ENCODE measurements at regions of chr1 and their contacts with region 1.

Region 1: GRCh38 chr1:190881064-190881463 is 403.4 kb upstream of the BRINP3 start:
- DNase-seq: no peak
- H3K4me3 ChIP-seq: no peak overlapping the region
- H3K27ac ChIP-seq: no peak overlapping the region
- H3K4me1 ChIP-seq: no peaks in the 10 kb centered on the region
- H3K27me3 ChIP-seq: no peaks in the 10 kb centered on the region
- CTCF ChIP-seq: no peak
- POLR2A ChIP-seq: no peak

Region 2: GRCh38 chr1:190518495-190518894 is 362.6 kb before region 1 on chr1:
- CTCF ChIA-PET with region 1: no interaction called
- POLR2A ChIA-PET with region 1: no interaction called
- dilution Hi-C with region 1: no loop called
- intact Hi-C with region 1: loop called (anchors 5 kb)
- DNase-seq: no peak
- H3K4me3 ChIP-seq: no peak overlapping the region
- H3K27ac ChIP-seq: no peak overlapping the region
- H3K4me1 ChIP-seq: no peaks in the 10 kb centered on the region
- H3K27me3 ChIP-seq: no peaks in the 10 kb centered on the region
- CTCF ChIP-seq: no peak
- POLR2A ChIP-seq: no peak

Region 3: GRCh38 chr1:190858140-190858539 is 22.9 kb before region 1 on chr1:
- CTCF ChIA-PET with region 1: no interaction called
- POLR2A ChIA-PET with region 1: no interaction called
- dilution Hi-C with region 1: no loop called
- intact Hi-C with region 1: no loop called
- DNase-seq: no peak
- H3K4me3 ChIP-seq: no peak overlapping the region
- H3K27ac ChIP-seq: no peak overlapping the region
- H3K4me1 ChIP-seq: no peaks in the 10 kb centered on the region
- H3K27me3 ChIP-seq: no peaks in the 10 kb centered on the region
- CTCF ChIP-seq: no peak
- POLR2A ChIP-seq: no peak

Region 4: GRCh38 chr1:190949939-190950338 is 68.9 kb after region 1 on chr1:
- CTCF ChIA-PET with region 1: no interaction called
- POLR2A ChIA-PET with region 1: no interaction called
- dilution Hi-C with region 1: no loop called
- intact Hi-C with region 1: no loop called
- DNase-seq: no peak
- H3K4me3 ChIP-seq: no peak overlapping the region
- H3K27ac ChIP-seq: no peak overlapping the region
- H3K4me1 ChIP-seq: no peaks in the 10 kb centered on the region
- H3K27me3 ChIP-seq: no peaks in the 10 kb centered on the region
- CTCF ChIP-seq: no peak
- POLR2A ChIP-seq: no peak